AG04449 (cell line): ENCODE measurements at regions of chr7 and their contacts with region 1.

Region 1: GRCh38 chr7:96067321-96067720 is 254.6 kb downstream of the SLC25A13 start:
- DNase-seq: no peak
- H3K4me3 ChIP-seq: no peak overlapping the region
- CTCF ChIP-seq: no peak

Region 2: GRCh38 chr7:97027427-97028234 is 960.3 kb after region 1 on chr7:
- CTCF ChIA-PET with region 1: interaction called, 14 read pairs
- POLR2A ChIA-PET with region 1: no interaction called
- DNase-seq: peak; percentile 44
- H3K4me3 ChIP-seq: peak overlapping the region; percentile 21
- CTCF ChIP-seq: peak; percentile 88